ENCODE measurements at regions of chr3 and their contacts with region 1.

Region 1: DNA sequence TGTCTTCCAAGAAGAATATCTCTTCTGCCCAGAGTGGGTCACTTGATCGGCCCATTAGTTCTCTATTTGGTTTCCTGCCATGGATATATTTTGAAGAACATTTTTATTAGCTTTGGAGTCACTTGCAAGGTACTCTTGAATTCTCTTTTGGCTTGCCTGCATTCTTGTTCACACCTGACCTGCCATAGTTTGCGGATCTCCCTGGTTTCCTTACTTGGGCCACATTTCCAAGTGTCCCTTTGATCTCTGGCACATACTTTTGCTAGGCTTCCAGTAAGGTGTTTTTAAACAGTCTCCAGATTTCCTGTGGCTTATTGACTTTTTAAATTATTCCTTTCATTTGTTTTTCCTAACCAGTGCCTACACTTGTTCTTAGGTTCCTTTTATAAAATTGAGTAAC is 488.5 kb upstream of the MDFIC2 start:
- DNase-seq: no peak
- H3K4me3 ChIP-seq: no peak overlapping the region
- H3K27ac ChIP-seq: no peak overlapping the region
- H3K4me1 ChIP-seq: no peaks in the 10 kb centered on the region
- H3K27me3 ChIP-seq: peaks cover 4% of the 10 kb centered on the region
- CTCF ChIP-seq: no peak

Region 2: GRCh38 chr3:70766301-70766700 is 34.6 kb before region 1 on chr3:
- CTCF ChIA-PET with region 1: no interaction called
- dilution Hi-C with region 1: no loop called
- in situ Hi-C with region 1: no loop called
- intact Hi-C with region 1: no loop called
- DNase-seq: no peak
- H3K4me3 ChIP-seq: no peak overlapping the region
- H3K27ac ChIP-seq: no peak overlapping the region
- H3K4me1 ChIP-seq: no peaks in the 10 kb centered on the region
- H3K27me3 ChIP-seq: no peaks in the 10 kb centered on the region
- CTCF ChIP-seq: no peak

Region 3: GRCh38 chr3:70871909-70872656 is 71.1 kb after region 1 on chr3:
- CTCF ChIA-PET with region 1: no interaction called
- dilution Hi-C with region 1: loop called (anchors 5 kb)
- in situ Hi-C with region 1: no loop called
- intact Hi-C with region 1: no loop called
- DNase-seq: peak; percentile 20
- H3K4me3 ChIP-seq: no peak overlapping the region
- H3K27ac ChIP-seq: no peak overlapping the region
- H3K4me1 ChIP-seq: no peaks in the 10 kb centered on the region
- H3K27me3 ChIP-seq: no peaks in the 10 kb centered on the region
- CTCF ChIP-seq: no peak